WTC11 (cell line): ENCODE measurements at regions of chr15 and their contacts with region 1.

Region 1: GRCh38 chr15:78811124-78811824 is at the start of gene ADAMTS7:
- DNase-seq: peak; percentile 88
- ATAC-seq: peak; percentile 85
- H3K4me3 Mint-ChIP-seq: peak within 1 kb of the TSS; percentile 78
- H3K27ac Mint-ChIP-seq: 0 out of 2 replicates have a peak within 1 kb of the TSS, but pooled peaks have one; percentile 2
- H3K4me1 Mint-ChIP-seq: peaks cover 30% of the 10 kb centered on the region
- H3K27me3 Mint-ChIP-seq: peaks cover 14% of the 10 kb centered on the region
- CTCF ChIP-seq: peak; percentile 82
- total RNA-seq, gene ADAMTS7: 66.5 to 70.3 TPM (median 67.1 TPM) in 3 replicates

Region 2: DNA sequence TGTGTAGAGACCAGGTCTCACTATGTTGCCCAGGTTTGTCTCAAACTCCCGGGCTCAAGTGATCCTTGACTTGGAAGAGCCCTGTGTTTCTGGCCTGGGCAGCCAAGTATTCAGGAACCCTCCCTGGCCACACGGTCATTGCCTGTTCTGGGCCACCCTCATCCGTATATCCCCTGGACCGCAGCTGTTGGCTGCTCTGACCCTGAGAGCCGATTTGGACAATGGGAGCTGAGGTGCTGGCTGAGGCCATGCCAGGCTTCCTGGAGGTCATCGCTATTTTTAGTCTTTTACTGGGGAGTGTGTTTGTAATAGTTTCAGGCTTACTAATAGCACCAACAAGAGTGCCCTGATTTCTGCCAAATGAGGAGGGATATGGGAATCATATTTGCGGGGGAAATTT is 60.7 kb before region 1 on chr15:
- CTCF ChIA-PET with region 1: interaction called, 15 read pairs
- POLR2A ChIA-PET with region 1: no interaction called
- DNase-seq: no peak
- ATAC-seq: no peak
- H3K4me3 Mint-ChIP-seq: peak overlapping the region; percentile 58
- H3K27ac Mint-ChIP-seq: no peak overlapping the region
- H3K4me1 Mint-ChIP-seq: peaks cover 4% of the 10 kb centered on the region
- H3K27me3 Mint-ChIP-seq: no peaks in the 10 kb centered on the region
- CTCF ChIP-seq: no peak

Region 3: GRCh38 chr15:78822514-78822913 is 11.2 kb after region 1 on chr15:
- CTCF ChIA-PET with region 1: interaction called, 26 read pairs
- POLR2A ChIA-PET with region 1: no interaction called
- DNase-seq: no peak
- ATAC-seq: no peak
- H3K4me3 Mint-ChIP-seq: no peak overlapping the region
- H3K27ac Mint-ChIP-seq: no peak overlapping the region
- H3K4me1 Mint-ChIP-seq: peaks cover 9% of the 10 kb centered on the region
- H3K27me3 Mint-ChIP-seq: no peaks in the 10 kb centered on the region
- CTCF ChIP-seq: no peak

Region 4: GRCh38 chr15:78838489-78838888 is 27.2 kb after region 1 on chr15:
- CTCF ChIA-PET with region 1: interaction called, 25 read pairs
- POLR2A ChIA-PET with region 1: no interaction called
- DNase-seq: no peak
- ATAC-seq: no peak
- H3K4me3 Mint-ChIP-seq: no peak overlapping the region
- H3K27ac Mint-ChIP-seq: no peak overlapping the region
- H3K4me1 Mint-ChIP-seq: 0 out of 2 replicates have a peak, but pooled peaks cover 10% of the 10 kb centered on the region
- H3K27me3 Mint-ChIP-seq: peaks cover 3% of the 10 kb centered on the region; the same call in 1 of the 2 replicates
- CTCF ChIP-seq: no peak

Region 5: GRCh38 chr15:78850941-78851755 is 39.9 kb after region 1 on chr15:
- CTCF ChIA-PET with region 1: interaction called, 16 read pairs
- POLR2A ChIA-PET with region 1: no interaction called
- DNase-seq: no peak
- ATAC-seq: peak; percentile 85
- H3K4me3 Mint-ChIP-seq: no peak overlapping the region
- H3K27ac Mint-ChIP-seq: 0 out of 2 replicates have a peak overlapping the region, but pooled peaks have one; percentile 15
- H3K4me1 Mint-ChIP-seq: peaks cover 16% of the 10 kb centered on the region
- H3K27me3 Mint-ChIP-seq: no peaks in the 10 kb centered on the region; the same call in 1 of the 2 replicates
- CTCF ChIP-seq: no peak

Region 6: DNA sequence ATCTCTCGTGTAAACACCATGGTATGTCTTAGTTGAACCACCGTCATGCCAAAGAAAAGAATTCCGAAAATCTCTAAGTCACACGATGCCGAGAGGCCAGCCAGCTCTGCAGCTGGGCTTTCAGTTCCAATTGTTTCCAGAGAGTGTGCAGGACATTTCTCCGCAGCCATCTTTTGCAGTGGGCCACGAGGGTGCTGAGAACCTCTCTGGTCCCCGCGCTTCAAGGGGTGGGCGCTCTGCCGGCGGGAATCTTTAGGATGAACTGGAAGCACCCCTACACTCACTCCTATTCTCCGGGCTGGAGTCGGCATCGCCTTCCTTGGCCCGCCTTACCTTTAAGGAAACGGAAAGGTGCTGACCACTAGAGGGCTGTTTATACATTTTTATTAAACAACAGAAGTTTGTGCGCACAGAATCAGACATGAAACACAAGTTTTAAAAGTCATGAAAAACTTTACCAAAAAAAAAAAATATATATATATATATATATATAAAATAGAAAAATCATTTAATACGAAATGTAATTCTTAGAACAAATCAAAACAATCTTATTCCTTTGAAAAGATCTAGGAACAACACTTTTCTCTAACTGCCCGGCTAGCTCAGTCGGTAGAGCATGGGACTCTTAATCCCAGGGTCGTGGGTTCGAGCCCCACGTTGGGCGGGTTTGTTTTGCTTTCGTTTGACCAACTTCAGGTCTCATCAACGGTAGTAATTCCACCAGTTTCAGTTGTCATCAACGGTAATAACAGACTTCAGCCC is 48.9 kb after region 1 on chr15:
- CTCF ChIA-PET with region 1: interaction called, 14 read pairs
- POLR2A ChIA-PET with region 1: interaction called, 4 read pairs
- DNase-seq: peak; percentile 80
- ATAC-seq: peak; percentile 98
- H3K4me3 Mint-ChIP-seq: peak overlapping the region; percentile 87
- H3K27ac Mint-ChIP-seq: peak overlapping the region; percentile 98
- H3K4me1 Mint-ChIP-seq: peaks cover 3% of the 10 kb centered on the region; the same call in 1 of the 2 replicates
- H3K27me3 Mint-ChIP-seq: no peaks in the 10 kb centered on the region
- CTCF ChIP-seq: peak; percentile 16; the same call in 1 of the 2 replicates

Region 7: DNA sequence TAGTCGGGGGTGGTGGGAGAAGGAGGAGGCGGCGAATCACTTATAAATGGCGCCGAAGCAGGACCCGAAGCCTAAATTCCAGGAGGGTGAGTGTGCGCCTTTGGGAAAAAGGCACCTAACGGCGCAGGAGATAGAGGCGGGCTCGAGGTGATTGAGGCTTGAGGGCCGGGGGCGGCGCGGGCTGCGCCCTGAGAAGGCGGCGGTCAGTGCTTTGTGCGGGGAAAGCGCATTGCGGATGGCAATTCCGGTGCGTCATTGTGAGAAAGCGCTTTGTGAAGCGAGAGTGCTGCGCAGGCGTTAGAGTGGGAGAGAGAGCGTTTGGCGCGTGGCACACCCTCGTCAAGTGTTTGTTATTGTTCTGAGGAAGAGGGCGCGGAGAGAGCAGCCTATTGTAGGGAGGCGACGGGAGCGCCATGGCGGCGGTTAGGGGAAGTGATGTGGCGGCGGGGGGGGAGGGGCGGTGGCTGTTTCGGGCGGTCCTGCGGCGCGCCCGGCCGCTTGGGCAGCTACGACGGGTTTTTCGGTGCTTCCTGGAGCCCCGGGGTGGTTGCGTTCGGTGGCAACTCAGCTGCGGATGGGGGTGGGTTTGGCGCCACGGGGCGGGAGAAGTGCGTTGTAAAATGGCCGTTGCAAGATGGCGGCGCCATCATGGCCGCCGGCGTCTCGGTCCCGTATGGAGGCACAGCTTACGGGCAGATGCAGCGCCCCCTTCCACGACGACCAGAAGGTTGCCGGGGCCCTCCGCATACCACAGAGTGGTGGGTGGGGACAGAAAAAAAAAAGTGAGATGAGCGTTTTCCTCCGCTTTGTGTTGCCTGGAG is 61.9 kb after region 1 on chr15:
- CTCF ChIA-PET with region 1: interaction called, 20 read pairs
- POLR2A ChIA-PET with region 1: interaction called, 13 read pairs
- DNase-seq: peak; percentile 91
- ATAC-seq: peak; percentile 71
- H3K4me3 Mint-ChIP-seq: peak overlapping the region; percentile 100
- H3K27ac Mint-ChIP-seq: peak overlapping the region; percentile 100
- H3K4me1 Mint-ChIP-seq: peaks cover 45% of the 10 kb centered on the region
- H3K27me3 Mint-ChIP-seq: no peaks in the 10 kb centered on the region
- CTCF ChIP-seq: no peak